Lower leg skin (tissue), 4 donors: ENCODE measurements at regions of chr5 and their contacts with region 1.

Region 1: DNA sequence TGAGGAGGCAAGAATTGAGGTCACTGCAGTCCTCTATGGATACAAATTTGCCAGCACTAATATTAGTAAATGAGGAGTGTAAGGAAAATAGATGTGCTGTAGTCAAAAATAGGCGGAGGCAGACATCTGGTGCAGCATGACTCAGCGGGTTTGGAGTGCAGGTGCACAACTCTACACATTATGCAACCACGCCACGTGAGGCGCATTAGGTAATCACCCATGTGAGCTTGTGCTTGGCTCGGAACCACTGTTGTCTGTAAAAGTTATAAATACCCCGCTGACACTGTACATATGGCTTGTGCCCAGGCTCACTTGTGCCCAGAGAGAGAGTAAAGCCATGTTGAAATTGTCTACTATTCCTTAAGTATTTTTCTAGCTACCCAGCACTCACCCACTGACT is 623.5 kb upstream of the NUDT12 start:
- DNase-seq: peak; percentile 77 to 86
- H3K4me3 ChIP-seq: no peak overlapping the region
- CTCF ChIP-seq: no peak
- POLR2A ChIP-seq: no peak

Region 2: GRCh38 chr5:103582364-103582763 is 603.7 kb before region 1 on chr5:
- intact Hi-C with region 1: loop called (anchors 10 kb)
- DNase-seq: no peak
- H3K4me3 ChIP-seq: no peak overlapping the region
- CTCF ChIP-seq: no peak
- POLR2A ChIP-seq: no peak